ENCODE measurements at regions of chr9 and their contacts with region 1.

Region 1: GRCh38 chr9:87701931-87702421 is 23.9 kb upstream of the CTSL start:
- DNase-seq: no peak
- H3K4me3 Mint-ChIP-seq: no peak overlapping the region
- H3K27ac Mint-ChIP-seq: no peak overlapping the region
- H3K4me1 Mint-ChIP-seq: peaks cover 5% of the 10 kb centered on the region
- H3K27me3 Mint-ChIP-seq: no peaks in the 10 kb centered on the region
- CTCF ChIP-seq: no peak

Region 2: DNA sequence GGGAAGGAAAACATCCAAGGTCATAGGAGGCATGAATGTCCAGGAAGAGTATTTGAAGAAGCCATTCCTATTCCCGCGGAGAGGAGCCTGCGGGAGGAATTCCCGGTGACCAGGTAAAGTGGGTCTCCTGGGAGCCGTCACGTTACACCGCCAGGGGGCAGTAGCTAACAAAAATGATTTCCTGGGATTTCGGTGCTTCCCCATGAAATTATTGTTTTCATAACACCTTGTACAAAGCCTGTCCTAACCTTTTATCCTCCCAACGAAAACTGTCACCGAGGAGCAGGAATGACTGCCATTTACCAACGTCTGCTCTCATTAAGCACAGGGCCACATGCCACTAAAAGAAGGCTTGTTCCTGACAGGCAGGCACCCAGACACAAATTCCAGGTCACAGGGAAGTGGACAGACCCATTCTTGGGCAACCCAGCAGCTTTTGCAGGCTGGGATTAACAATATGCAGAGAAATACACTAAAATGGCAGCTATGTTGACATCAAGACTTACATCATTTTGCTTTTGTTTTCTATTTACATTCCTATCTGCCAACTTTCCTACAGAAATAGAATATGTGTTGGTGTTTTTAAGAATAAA is 17.3 kb before region 1 on chr9:
- CTCF ChIA-PET with region 1: interaction called, 18 read pairs
- POLR2A ChIA-PET with region 1: no interaction called
- intact Hi-C with region 1: no loop called
- DNase-seq: peak; percentile 70
- H3K4me3 Mint-ChIP-seq: no peak overlapping the region
- H3K27ac Mint-ChIP-seq: no peak overlapping the region
- H3K4me1 Mint-ChIP-seq: peaks cover 6% of the 10 kb centered on the region
- H3K27me3 Mint-ChIP-seq: no peaks in the 10 kb centered on the region
- CTCF ChIP-seq: peak; percentile 67

Region 3: DNA sequence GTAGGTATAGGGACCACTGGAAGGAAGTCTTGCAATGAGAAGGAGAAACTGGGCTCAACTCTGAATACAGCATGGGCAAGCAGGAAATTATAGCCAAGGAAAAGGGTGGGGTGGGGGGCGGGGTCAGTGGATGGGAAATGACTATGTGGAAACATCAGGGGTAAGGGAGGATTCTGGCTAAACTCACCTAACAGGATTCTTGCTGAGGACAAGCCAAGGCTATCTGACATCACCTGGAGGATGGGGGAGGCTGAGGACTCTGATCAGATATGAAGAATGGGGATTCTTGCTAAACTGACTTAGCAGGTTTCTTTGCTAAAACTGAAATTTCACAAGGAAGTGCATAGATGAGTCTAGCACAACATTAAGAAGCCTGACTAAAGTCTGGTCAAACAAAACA is 64.7 kb after region 1 on chr9:
- CTCF ChIA-PET with region 1: no interaction called
- POLR2A ChIA-PET with region 1: no interaction called
- intact Hi-C with region 1: no loop called
- DNase-seq: no peak
- H3K4me3 Mint-ChIP-seq: no peak overlapping the region
- H3K27ac Mint-ChIP-seq: no peak overlapping the region
- H3K4me1 Mint-ChIP-seq: peaks cover 5% of the 10 kb centered on the region
- H3K27me3 Mint-ChIP-seq: peaks cover 13% of the 10 kb centered on the region
- CTCF ChIP-seq: no peak

Region 4: DNA sequence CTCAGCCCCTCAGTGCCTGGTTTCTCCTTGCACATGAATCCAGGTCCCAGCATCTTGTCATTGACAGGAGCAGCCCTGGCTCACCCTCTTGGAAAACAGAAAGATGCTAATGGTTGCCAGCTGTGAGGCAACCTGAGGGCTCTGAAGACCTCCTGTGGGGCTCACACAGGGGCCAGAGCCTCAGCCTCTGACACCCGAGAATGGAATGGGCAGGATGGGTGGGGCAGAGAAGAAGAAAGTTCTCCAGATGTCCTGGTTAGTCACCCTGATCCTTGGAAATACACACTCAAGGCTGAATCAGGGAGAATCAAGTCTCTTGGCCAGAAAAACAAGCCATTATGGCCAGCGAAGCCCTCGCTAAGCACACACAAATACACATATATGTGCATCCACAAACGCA is 148.4 kb after region 1 on chr9:
- CTCF ChIA-PET with region 1: no interaction called
- POLR2A ChIA-PET with region 1: no interaction called
- intact Hi-C with region 1: no loop called
- DNase-seq: peak; percentile 58
- H3K4me3 Mint-ChIP-seq: no peak overlapping the region
- H3K27ac Mint-ChIP-seq: no peak overlapping the region
- H3K4me1 Mint-ChIP-seq: peaks cover 13% of the 10 kb centered on the region
- H3K27me3 Mint-ChIP-seq: no peaks in the 10 kb centered on the region
- CTCF ChIP-seq: no peak

Region 5: DNA sequence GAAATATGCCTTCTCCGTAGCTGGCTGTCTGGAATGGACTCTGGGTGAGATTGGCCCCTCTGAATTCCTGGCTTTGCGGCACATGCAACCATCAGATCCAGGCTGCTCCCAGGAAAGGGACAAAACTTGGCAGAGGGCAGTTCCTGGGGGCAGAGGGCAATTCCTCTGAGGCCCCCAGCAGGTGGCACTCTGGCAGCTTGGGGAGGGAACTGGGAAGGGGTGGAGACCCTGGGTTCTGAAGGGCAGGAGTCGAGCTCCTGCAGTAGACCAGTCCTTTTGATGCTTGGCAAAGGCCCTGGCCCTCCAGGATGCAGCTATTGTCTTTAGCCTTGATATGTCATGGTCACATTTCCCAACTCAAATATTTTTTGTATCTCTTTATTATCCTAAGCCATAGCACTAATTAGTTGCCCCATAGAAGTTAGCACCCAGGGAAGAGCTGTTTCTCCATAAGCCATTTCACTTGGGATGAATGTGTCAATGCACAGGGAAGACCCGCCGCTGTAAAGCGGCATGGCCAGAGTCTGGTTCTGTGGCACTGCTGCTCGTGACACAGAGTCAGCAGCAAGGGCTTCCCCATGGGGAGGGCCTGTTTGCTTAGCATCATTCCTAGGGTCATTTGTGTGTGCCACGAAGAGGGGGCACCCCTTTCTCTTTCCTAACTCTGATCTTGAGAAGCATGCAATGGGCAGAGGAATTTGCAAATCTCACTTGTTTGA is 323.6 kb after region 1 on chr9:
- CTCF ChIA-PET with region 1: no interaction called
- POLR2A ChIA-PET with region 1: no interaction called
- intact Hi-C with region 1: no loop called
- DNase-seq: no peak
- H3K4me3 Mint-ChIP-seq: no peak overlapping the region
- H3K27ac Mint-ChIP-seq: no peak overlapping the region
- H3K4me1 Mint-ChIP-seq: no peaks in the 10 kb centered on the region
- H3K27me3 Mint-ChIP-seq: no peaks in the 10 kb centered on the region
- CTCF ChIP-seq: no peak